Left colon (tissue), 2 donors: ENCODE measurements at regions of chr16 and their contacts with region 1.

Region 1: DNA sequence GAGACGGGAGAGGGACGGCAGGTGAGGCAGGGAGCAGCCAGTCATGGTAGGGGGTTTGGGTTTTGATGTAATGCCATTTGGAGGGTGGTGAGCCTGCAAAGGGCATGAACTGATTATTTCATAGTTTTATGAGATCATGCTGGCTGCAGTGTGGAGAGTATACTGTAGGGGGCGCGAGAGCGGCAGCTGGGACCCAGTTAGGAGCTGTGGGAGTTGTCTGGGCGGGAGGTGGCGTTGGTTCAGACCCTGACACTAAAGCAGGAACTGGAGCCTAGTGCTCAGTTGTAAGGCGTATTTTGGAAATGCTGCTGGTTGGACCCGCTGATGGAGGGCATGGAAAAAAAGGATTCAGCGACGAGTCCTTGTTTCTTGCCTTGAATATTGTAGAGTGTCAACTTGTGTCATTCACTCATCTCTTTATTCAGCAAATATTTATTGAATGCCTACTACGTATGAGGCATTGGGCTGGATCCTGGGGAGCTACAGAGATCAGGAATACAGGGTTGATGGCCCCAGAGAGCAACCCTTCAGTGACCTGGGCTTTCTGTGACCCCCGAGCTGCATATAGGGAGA is 23.7 kb upstream of the KDM8 start:
- DNase-seq: peak; percentile 84 to 93
- ATAC-seq: peak; percentile 97

Region 2: DNA sequence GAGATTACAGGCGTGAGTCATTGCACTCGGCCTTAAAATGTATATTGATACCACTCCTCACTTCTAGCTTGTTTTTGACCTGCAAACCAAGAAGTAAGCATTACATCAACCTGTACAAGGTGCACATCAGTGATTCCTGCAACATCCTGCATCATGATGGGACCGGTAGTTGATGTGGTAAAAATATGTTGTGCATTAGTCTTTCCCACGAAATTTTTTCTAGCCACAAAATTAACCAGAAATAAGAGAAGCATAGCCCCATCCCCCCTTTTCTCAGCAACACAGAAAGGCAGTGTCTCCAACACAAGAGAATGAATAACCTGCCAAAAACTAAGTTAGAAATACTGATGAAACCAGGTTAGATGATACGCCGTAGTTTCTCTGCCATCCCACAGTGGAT is 110.1 kb after region 1 on chr16:
- intact Hi-C with region 1: loop called in 1 of 2 experiments (anchors 10 kb)
- DNase-seq: no peak
- ATAC-seq: no peak

Region 3: DNA sequence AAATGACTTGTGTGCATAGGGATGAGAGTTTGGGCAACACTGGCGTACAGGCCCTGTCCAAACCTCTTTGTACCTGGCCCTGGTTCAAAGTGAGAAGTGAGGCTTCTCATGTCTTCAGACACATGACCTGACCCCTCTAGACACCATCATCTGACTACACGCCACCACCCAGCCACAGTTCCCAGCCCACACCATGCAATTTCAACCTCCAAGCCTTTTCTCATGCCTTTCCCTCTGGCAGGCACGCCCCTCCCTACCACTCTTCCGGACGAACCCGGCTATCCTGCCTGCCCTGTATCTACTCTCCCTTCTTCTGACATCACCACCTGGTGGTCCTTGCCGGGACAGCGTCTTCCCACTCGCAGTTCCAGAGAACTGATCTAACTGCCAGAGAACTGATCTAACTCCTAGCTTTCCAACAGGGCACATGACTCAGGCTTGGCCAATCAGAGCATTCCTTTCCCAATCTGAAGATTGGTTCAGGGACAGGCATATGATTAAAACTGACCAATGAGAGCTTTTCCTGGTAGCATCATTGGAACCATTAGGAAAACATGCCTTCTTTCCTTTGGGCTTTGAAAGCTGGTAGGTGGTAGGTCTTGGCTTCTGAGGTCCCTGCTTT is 195.3 kb after region 1 on chr16:
- intact Hi-C with region 1: loop called in 1 of 2 experiments (anchors 5 kb)
- DNase-seq: peak; percentile 55 to 64
- ATAC-seq: peak; percentile 68